ENCODE measurements at regions of chr1 and their contacts with region 1.

Region 1: DNA sequence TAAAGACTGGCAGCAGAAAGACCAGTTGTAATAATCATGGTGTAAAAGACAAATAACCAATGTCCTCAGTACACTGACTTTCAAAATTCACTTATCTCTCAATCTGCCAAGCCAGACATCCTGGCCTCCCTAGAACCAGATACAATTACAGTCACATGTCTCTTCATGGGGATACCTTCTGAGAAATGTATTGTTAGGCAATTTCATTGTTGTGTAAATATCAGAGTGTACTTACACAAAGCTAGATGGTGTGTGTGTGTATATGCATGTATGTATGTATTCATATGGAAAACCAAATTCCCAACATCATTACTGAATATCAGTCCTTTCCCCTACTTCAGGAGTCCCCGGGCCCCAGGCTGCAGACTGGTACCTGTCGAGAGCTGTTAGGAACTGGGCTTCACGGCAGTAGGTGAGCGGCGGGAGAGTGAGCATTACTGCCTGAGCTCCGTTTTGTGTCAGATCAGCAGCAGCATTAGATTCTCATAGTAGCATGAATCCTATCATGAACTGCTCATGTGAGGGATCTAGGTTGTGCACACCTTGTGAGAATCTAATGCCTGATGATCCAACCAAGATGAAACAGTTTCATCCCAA is 65.3 kb upstream of the ZNF326 start:
- DNase-seq: no peak
- H3K4me3 ChIP-seq: no peak overlapping the region
- H3K27ac ChIP-seq: peak overlapping the region in 11 of 59 donors; percentile 0 to 48 (median 33)
- H3K27me3 ChIP-seq: no peaks in the 10 kb centered on the region
- CTCF ChIP-seq: no peak

Region 2: GRCh38 chr1:89884718-89885596 is 44.6 kb before region 1 on chr1:
- intact Hi-C with region 1: loop called in 1 of 2 experiments (anchors 5 kb)
- DNase-seq: no peak
- H3K4me3 ChIP-seq: no peak overlapping the region
- H3K27ac ChIP-seq: peak overlapping the region in 29 of 59 donors; percentile 0 to 71 (median 21)
- H3K27me3 ChIP-seq: no peaks in the 10 kb centered on the region
- CTCF ChIP-seq: no peak